HEK293 (cell line): ENCODE measurements at regions of chr17 and their contacts with region 1.

Region 1: DNA sequence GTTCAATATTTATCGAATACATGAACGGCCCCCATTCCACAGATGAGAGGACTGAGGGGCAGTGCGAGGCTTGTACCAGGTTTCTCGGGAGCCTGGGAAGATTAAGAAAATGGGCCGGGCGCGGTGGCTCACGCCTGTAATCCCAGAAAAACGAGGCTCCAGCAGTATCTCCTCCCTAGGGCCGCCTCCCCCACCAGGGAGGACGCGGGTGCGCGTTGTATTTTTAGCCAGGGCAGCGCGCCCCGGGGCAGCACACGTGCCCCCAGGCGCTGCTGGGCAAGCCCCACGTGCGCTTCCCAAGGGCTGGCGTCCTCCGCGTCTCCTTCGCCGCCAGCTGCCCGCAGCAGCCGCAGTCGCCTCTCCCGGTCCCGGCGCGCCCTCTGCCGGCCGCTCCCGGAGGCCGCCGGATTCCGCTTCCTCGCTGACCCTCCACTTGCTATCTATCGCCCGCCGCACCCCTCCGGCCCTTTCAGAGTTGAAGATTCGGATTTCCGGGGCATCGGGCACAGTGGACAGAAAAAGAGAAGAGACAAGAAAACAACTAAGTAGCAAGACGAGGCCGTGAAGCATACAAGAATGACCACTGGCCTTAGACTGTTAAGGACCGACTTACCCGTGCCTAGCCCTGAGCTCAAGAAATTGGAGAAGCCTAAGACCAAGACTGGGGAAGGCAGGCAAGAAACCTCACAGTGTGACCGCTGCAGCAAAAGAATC is 1.9 kb upstream of the YBX2 start:
- H3K4me3 ChIP-seq: no peak overlapping the region
- H3K27ac ChIP-seq: no peak overlapping the region
- H3K4me1 ChIP-seq: peaks cover 6% of the 10 kb centered on the region; the same call in 1 of the 2 replicates
- CTCF ChIP-seq: peak; percentile 96

Region 2: GRCh38 chr17:7239091-7240027 is 57.0 kb before region 1 on chr17 and contains the start of gene PHF23:
- CTCF ChIA-PET with region 1: interaction called, 14 read pairs
- POLR2A ChIA-PET with region 1: interaction called, 4 read pairs
- H3K4me3 ChIP-seq: peak within 1 kb of the TSS; percentile 90
- H3K27ac ChIP-seq: peak within 1 kb of the TSS; percentile 89
- H3K4me1 ChIP-seq: peaks cover 13% of the 10 kb centered on the region
- CTCF ChIP-seq: peak; percentile 30; the same call in 1 of the 2 replicates

Region 3: GRCh38 chr17:7280519-7281429 is 15.6 kb before region 1 on chr17:
- CTCF ChIA-PET with region 1: interaction called, 160 read pairs
- POLR2A ChIA-PET with region 1: interaction called, 20 read pairs
- H3K4me3 ChIP-seq: peak overlapping the region; percentile 32
- H3K27ac ChIP-seq: no peak overlapping the region
- H3K4me1 ChIP-seq: peaks cover 9% of the 10 kb centered on the region
- CTCF ChIP-seq: peak; percentile 99

Region 4: DNA sequence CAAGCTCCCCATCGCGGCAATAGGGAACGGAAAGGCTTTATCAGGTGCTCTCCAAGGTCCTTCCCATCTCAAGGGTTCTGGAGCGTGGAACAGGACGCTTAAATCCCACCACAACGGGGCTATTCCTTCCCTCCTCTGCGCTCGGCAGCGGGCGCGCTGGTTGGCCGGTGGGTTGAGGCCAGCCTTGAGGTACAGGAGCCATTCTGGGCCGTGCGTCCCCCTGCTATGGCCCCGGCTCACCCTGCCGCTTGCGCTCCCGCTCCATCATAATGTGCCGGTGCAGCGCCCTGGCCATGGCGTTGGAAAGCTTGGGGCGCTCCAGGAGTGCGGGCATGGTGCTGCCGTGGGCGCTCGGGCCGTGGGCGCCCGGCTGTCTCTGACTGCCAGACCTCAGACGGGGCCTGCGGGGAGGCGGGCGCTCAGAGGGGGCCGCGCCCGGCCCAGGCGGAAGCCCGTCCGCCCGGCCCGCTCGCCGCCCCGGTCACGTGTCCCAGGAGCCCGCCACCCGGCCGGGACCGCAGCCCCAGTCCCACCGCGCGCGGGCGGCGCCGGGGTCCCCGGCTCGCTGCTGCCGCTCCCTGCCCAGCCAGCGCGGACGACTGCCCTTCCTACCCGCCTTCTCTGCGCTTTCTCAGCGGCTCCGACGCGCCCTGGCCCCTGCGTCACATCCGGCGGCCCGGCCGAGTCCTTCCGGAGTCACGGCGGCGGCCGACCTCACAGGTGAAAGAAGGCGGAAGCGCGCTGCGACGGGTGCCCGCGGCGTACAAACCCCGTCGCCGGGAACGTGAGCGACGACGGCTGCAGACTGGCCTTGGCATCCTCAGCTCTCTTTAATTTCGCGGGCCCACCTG is 18.6 kb after region 1 on chr17 and contains the start of gene GPS2:
- CTCF ChIA-PET with region 1: interaction called, 22 read pairs
- POLR2A ChIA-PET with region 1: interaction called, 5 read pairs
- H3K4me3 ChIP-seq: peak within 1 kb of the TSS; percentile 87
- H3K27ac ChIP-seq: peak within 1 kb of the TSS; percentile 98
- H3K4me1 ChIP-seq: peaks cover 11% of the 10 kb centered on the region
- CTCF ChIP-seq: no peak; the same call in 1 of the 2 replicates

Region 5: DNA sequence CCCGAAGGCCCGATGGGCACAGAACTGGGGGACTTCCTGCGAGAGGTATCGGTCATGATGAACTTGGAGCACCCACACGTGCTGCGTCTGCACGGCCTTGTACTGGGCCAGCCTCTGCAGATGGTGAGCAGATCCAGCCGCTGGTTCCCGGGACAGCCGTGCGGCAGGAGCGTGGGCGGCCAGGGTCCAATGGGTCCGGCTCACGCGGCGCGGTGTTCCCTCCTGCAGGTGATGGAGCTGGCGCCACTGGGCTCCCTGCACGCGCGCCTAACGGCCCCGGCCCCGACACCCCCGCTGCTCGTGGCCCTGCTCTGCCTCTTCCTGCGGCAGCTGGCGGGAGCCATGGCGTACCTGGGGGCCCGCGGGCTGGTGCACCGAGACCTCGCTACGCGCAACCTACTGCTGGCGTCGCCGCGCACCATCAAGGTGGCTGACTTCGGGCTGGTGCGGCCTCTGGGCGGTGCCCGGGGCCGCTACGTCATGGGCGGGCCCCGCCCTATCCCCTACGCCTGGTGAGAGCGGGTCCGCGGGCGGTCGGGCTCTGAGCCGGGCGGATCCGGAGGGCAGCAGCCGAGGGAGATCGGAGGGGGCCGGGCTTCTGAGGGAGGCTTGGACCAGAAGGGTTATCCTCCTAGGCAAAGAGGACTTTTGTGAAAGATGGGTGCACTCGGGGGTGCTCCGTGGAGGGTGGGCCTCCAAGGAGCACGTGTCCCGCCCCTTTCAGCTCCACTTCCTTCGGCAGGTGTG is 87.6 kb after region 1 on chr17:
- CTCF ChIA-PET with region 1: no interaction called
- POLR2A ChIA-PET with region 1: no interaction called
- H3K4me3 ChIP-seq: no peak overlapping the region
- H3K27ac ChIP-seq: no peak overlapping the region
- H3K4me1 ChIP-seq: no peaks in the 10 kb centered on the region
- CTCF ChIP-seq: no peak

Region 6: DNA sequence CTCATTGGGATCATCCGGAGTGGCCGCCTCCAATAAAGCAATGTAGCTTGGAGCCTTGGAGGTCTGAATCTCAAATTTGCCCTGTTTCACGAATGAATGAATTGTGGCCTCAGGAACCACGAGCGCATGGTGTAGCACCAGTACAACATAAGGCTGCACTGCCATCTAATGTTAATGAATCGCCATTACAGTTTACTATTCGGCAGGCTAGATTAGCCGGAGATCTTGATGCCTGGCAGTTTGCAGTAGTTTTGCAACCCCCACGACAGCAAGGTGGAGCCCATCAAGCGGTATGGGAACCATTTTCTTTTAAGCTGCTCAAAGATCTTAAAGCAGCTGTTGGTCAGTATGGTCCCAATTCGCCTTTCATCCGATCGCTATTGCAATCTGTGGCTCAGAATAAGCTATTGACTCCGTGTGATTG is 761.4 kb after region 1 on chr17:
- CTCF ChIA-PET with region 1: no interaction called
- POLR2A ChIA-PET with region 1: no interaction called
- H3K4me3 ChIP-seq: no peak overlapping the region
- H3K27ac ChIP-seq: no peak overlapping the region
- H3K4me1 ChIP-seq: peaks cover 5% of the 10 kb centered on the region; the same call in 1 of the 2 replicates
- CTCF ChIP-seq: peak; percentile 73